A673 (cell line): ENCODE measurements at regions of chr18 and their contacts with region 1.

Region 1: GRCh38 chr18:11937874-11938478 is 29.9 kb upstream of the MPPE1 start:
- DNase-seq: peak; percentile 73
- H3K4me3 ChIP-seq: no peak overlapping the region
- H3K27ac ChIP-seq: no peak overlapping the region
- H3K4me1 ChIP-seq: no peaks in the 10 kb centered on the region
- H3K27me3 ChIP-seq: no peaks in the 10 kb centered on the region
- CTCF ChIP-seq: peak; percentile 80

Region 2: DNA sequence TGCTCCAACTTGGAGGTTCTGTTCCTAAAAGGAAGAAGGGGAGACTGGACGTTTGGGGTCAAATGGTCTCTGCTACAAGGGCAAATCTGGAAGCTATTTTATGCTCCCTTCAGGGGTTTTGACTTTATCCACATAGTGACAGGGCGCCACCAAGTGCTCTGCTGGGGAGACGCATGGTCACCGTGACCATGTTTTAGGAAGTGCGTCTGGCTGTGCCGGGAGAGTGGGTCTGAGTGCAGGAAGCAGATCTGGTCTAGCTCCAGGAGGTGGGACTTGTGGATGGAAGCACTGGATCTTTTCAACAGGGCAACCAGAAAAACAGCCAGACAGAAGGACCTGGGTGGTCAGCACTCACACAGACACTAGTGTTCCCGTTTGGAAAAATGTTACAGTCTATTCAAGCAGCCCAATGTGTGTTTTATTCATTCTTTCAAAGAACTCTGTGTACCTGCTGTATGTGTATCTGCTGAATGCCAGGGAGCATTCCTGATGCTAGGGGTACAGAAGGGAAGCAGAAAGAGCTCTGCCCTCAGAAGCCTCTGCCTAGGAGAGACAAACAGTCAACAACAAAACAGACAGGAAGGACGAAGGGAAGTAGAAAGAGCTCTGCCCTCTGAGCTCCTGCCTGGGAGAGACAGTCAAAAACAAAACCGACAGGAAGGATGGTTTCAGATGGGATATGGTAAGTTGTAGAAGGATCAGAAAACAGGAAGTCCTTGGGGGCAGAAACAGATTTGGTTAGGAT is 57.6 kb after region 1 on chr18:
- CTCF ChIA-PET with region 1: interaction called, 82 read pairs
- POLR2A ChIA-PET with region 1: no interaction called
- intact Hi-C with region 1: loop called (anchors 1 kb)
- DNase-seq: peak; percentile 75
- H3K4me3 ChIP-seq: no peak overlapping the region
- H3K27ac ChIP-seq: no peak overlapping the region
- H3K4me1 ChIP-seq: no peaks in the 10 kb centered on the region
- H3K27me3 ChIP-seq: no peaks in the 10 kb centered on the region
- CTCF ChIP-seq: peak; percentile 92

Region 3: GRCh38 chr18:12038639-12039417 is 100.9 kb after region 1 on chr18:
- CTCF ChIA-PET with region 1: interaction called, 14 read pairs
- POLR2A ChIA-PET with region 1: no interaction called
- intact Hi-C with region 1: loop called (anchors 1 kb)
- DNase-seq: peak; percentile 67
- H3K4me3 ChIP-seq: peak overlapping the region; percentile 57
- H3K27ac ChIP-seq: no peak overlapping the region
- H3K4me1 ChIP-seq: no peaks in the 10 kb centered on the region
- H3K27me3 ChIP-seq: no peaks in the 10 kb centered on the region
- CTCF ChIP-seq: peak; percentile 96

Region 4: GRCh38 chr18:13003466-13003896 is 1065.5 kb after region 1 on chr18:
- CTCF ChIA-PET with region 1: no interaction called
- POLR2A ChIA-PET with region 1: no interaction called
- intact Hi-C with region 1: no loop called
- DNase-seq: peak; percentile 54
- H3K4me3 ChIP-seq: no peak overlapping the region
- H3K27ac ChIP-seq: no peak overlapping the region
- H3K4me1 ChIP-seq: no peaks in the 10 kb centered on the region
- H3K27me3 ChIP-seq: no peaks in the 10 kb centered on the region
- CTCF ChIP-seq: peak; percentile 62